ENCODE measurements at regions of chr3 and their contacts with region 1.

Region 1: DNA sequence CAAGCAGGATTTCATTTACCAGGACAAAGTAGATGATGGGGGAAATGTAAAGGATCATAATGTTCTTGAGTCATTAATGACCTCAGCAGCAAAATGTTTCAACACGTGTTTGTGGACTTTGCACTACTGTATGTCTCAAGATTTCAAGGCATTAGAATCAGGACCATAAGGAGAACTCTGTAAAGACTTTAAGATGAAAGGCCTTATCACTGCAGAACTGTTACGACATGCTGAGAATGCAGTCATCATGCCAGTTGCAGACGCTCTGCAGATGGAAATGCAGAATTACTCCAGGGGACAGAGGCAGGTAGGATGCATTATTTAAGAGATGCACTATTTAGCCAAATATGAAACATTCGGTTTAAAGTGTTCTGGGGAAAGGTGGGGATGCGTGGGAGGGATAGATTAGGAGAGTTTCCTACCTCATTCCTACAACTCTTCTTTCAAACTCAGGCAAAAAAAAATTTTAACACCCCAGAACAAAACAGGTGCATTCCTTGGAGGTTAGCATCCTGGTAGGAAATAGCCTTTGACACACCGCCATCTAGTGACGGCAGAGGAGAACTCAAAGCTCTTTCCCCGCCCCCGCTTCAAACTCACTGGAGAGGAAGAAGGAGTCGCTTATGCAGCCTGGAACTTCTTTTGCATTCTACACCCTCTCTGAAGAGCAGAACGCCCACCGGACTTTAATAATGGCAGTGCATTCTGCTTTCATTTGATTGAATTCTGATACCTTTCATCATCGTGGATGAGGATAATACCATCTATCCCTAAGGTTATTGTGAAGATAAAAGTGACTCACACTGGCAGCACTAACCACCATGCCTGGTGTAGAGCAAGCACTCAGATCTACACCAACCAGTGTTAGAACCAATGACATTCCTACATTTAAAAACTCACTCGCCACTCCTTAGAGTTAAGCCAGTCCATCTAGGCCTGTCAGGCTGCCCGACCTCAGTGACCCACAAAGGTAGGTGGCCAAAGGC is 43.1 kb upstream of the TOPAZ1 start:
- DNase-seq: peak; percentile 56
- ATAC-seq: peak; percentile 94
- H3K4me3 ChIP-seq: no peak overlapping the region
- H3K27ac ChIP-seq: no peak overlapping the region
- H3K4me1 ChIP-seq: peaks cover 0 to 4% of the 10 kb centered on the region in 2 experiments; a peak in 1 of 4 replicates
- H3K27me3 ChIP-seq: 0 out of 2 replicates have a peak, but pooled peaks cover 3% of the 10 kb centered on the region
- CTCF ChIP-seq: peak; percentile 79 to 80 (median 79)
- POLR2A ChIP-seq: no peak
- RAD21 ChIP-seq: peak; percentile 94

Region 2: DNA sequence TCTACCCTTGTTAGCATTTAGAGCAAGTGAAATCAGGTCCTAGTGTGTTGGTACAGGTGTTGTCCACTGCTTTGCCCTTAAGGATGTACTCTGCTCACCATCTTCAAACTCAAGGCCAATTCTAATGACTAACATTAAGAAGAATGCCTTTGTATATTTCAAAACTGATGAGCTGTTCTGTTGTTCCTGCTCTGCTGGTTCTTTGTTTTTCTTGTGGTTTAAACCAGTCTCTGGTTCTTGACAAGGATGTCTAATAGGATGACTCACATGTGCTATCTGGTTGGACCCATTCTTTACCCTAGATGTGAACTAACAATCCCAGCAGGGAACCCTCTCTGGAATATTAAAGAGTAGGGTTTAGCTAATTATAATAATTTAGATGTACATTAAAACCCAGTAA is 490.6 kb before region 1 on chr3:
- CTCF ChIA-PET with region 1: no interaction called
- POLR2A ChIA-PET with region 1: no interaction called
- RAD21 ChIA-PET with region 1: no interaction called
- intact Hi-C with region 1: loop called (anchors 5 kb)
- DNase-seq: peak; percentile 85
- ATAC-seq: peak; percentile 96
- H3K4me3 ChIP-seq: no peak overlapping the region
- H3K27ac ChIP-seq: peak overlapping the region; percentile 17; the same call in 1 of the 2 replicates
- H3K4me1 ChIP-seq: peaks cover 20 to 34% of the 10 kb centered on the region in 2 experiments
- H3K27me3 ChIP-seq: no peaks in the 10 kb centered on the region
- CTCF ChIP-seq: no peak
- POLR2A ChIP-seq: no peak
- RAD21 ChIP-seq: peak; percentile 28; the same call in 1 of the 2 replicates

Region 3: GRCh38 chr3:43769471-43770425 is 428.8 kb before region 1 on chr3:
- CTCF ChIA-PET with region 1: interaction called, 7 read pairs
- POLR2A ChIA-PET with region 1: no interaction called
- RAD21 ChIA-PET with region 1: no interaction called
- intact Hi-C with region 1: loop called (anchors 1 kb)
- DNase-seq: peak; percentile 94
- ATAC-seq: peak; percentile 100
- H3K4me3 ChIP-seq: peak overlapping the region; percentile 21 to 47
- H3K27ac ChIP-seq: peak overlapping the region; percentile 2; the same call in 1 of the 2 replicates
- H3K4me1 ChIP-seq: peaks cover 18 to 39% of the 10 kb centered on the region in 2 experiments
- H3K27me3 ChIP-seq: no peaks in the 10 kb centered on the region
- CTCF ChIP-seq: peak; percentile 84 to 90 (median 89)
- POLR2A ChIP-seq: peak; percentile 26
- RAD21 ChIP-seq: peak; percentile 88

Region 4: DNA sequence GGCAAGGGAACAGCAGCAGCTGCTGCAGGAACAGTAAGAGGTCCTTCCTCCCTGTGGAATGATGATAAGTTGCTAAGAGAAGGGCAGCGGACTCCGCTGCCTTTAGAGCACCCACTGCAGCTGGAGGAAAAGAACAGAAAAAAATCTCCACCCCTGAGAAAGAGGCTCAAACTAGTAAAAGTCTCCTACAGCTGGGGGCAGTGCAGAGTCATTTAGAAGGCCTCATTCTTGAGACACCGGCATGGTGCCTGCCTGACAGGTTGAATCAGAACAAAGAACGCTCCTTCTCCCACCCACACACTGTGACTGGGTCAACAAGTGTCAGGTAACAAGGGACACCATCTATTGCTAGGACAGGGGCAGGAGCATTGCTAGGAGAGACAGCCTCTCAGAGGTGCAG is 319.4 kb before region 1 on chr3:
- CTCF ChIA-PET with region 1: interaction called, 4 read pairs
- POLR2A ChIA-PET with region 1: no interaction called
- RAD21 ChIA-PET with region 1: no interaction called
- intact Hi-C with region 1: loop called (anchors 2 kb)
- DNase-seq: peak; percentile 58
- ATAC-seq: peak; percentile 94
- H3K4me3 ChIP-seq: no peak overlapping the region
- H3K27ac ChIP-seq: no peak overlapping the region
- H3K4me1 ChIP-seq: peaks cover 5 to 20% of the 10 kb centered on the region in 2 experiments; a peak in 3 of 4 replicates
- H3K27me3 ChIP-seq: no peaks in the 10 kb centered on the region
- CTCF ChIP-seq: peak; percentile 58 to 63 (median 59); a peak in 5 of 6 replicates
- POLR2A ChIP-seq: no peak
- RAD21 ChIP-seq: peak; percentile 74